Activated naive CD4-positive, alpha-beta T cell treated with anti-CD3 and anti-CD28 coated beads for 36 hours (primary cell): ENCODE measurements at regions of chr5 and their contacts with region 1.

Region 1: GRCh38 chr5:173775261-173776129 is 112.7 kb upstream of the CPEB4 start:
- DNase-seq: no peak
- H3K4me3 Mint-ChIP-seq: no peak overlapping the region
- H3K27ac Mint-ChIP-seq: no peak overlapping the region
- H3K4me1 Mint-ChIP-seq: peaks cover 11% of the 10 kb centered on the region
- H3K27me3 Mint-ChIP-seq: no peaks in the 10 kb centered on the region

Region 2: GRCh38 chr5:173848986-173849596 is 73.6 kb after region 1 on chr5:
- CTCF ChIA-PET with region 1: no interaction called
- intact Hi-C with region 1: loop called (anchors 2 kb)
- DNase-seq: no peak
- H3K4me3 Mint-ChIP-seq: no peak overlapping the region
- H3K27ac Mint-ChIP-seq: no peak overlapping the region
- H3K4me1 Mint-ChIP-seq: no peaks in the 10 kb centered on the region
- H3K27me3 Mint-ChIP-seq: peaks cover 6% of the 10 kb centered on the region